ENCODE measurements at regions of chr15 and their contacts with region 1.

Region 1: GRCh38 chr15:67080900-67081431 is 15.6 kb downstream of the SMAD3 start:
- DNase-seq: peak; percentile 99
- ATAC-seq: peak; percentile 58
- H3K4me3 ChIP-seq: peak overlapping the region; percentile 56
- H3K27ac ChIP-seq: peak overlapping the region; percentile 93
- H3K4me1 ChIP-seq: peaks cover 86% of the 10 kb centered on the region
- H3K27me3 ChIP-seq: no peaks in the 10 kb centered on the region
- CTCF ChIP-seq: peak; percentile 44 to 51 (median 49)
- EP300 ChIP-seq: peak; percentile 86 to 93; a peak in 3 of 4 replicates
- POLR2A ChIP-seq: peak; percentile 38; the same call in 1 of the 2 replicates
- RAD21 ChIP-seq: peak; percentile 60

Region 2: GRCh38 chr15:67036775-67037555 is 44.0 kb before region 1 on chr15:
- CTCF ChIA-PET with region 1: interaction called, 3 read pairs
- POLR2A ChIA-PET with region 1: no interaction called
- RAD21 ChIA-PET with region 1: interaction called, 4 read pairs
- SMC1A ChIA-PET with region 1: interaction called, 10 read pairs
- in situ Hi-C with region 1: no loop called
- intact Hi-C with region 1: no loop called
- DNase-seq: no peak
- ATAC-seq: no peak
- H3K4me3 ChIP-seq: no peak overlapping the region
- H3K27ac ChIP-seq: no peak overlapping the region
- H3K4me1 ChIP-seq: peaks cover 5% of the 10 kb centered on the region; the same call in 1 of the 2 replicates
- H3K27me3 ChIP-seq: no peaks in the 10 kb centered on the region
- CTCF ChIP-seq: no peak
- EP300 ChIP-seq: no peak
- POLR2A ChIP-seq: no peak
- RAD21 ChIP-seq: no peak

Region 3: DNA sequence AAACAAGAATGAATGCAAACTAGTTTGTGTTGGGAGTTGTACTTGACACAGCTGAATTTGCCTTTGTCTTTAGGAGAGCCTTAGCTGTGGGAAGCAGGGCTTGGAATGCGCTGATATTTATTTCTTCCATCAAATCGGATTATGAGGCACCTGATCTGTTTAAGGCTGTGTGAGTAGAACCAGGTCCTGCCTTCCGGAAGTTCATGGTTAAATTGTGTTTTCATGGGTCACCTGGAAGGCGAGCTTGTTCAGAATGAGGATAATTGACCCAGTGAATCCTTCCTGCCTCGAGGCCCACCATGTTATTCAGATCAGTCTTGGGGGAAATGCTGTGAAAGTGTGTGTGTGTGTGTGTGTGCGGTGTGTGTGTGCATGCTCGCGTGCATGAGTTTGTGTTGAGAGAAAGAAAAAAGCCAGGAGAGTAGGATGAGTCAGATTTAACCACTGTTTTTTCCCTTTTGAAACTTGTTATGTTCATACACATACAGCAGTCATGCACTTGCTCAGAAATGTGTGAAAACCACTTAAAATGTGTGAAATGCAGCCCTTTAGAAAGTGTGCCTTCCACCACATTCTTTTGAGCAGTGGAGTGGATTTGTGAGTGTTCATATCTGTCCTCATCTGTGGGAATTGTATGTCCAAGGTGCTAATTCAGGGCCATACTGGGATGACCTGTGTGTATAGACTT is 21.1 kb after region 1 on chr15:
- CTCF ChIA-PET with region 1: interaction called, 71 read pairs
- POLR2A ChIA-PET with region 1: interaction called, 79 read pairs
- RAD21 ChIA-PET with region 1: interaction called, 194 read pairs
- SMC1A ChIA-PET with region 1: interaction called, 247 read pairs
- in situ Hi-C with region 1: no loop called
- intact Hi-C with region 1: loop called (anchors 1 kb)
- DNase-seq: peak; percentile 97
- ATAC-seq: peak; percentile 70
- H3K4me3 ChIP-seq: peak overlapping the region; percentile 0; the same call in 1 of the 2 replicates
- H3K27ac ChIP-seq: peak overlapping the region; percentile 98
- H3K4me1 ChIP-seq: peaks cover 76% of the 10 kb centered on the region
- H3K27me3 ChIP-seq: no peaks in the 10 kb centered on the region
- CTCF ChIP-seq: no peak
- EP300 ChIP-seq: peak; percentile 99 to 100
- POLR2A ChIP-seq: no peak
- RAD21 ChIP-seq: peak; percentile 30

Region 4: GRCh38 chr15:67120839-67121643 is 40.1 kb after region 1 on chr15:
- CTCF ChIA-PET with region 1: interaction called, 5 read pairs
- POLR2A ChIA-PET with region 1: interaction called, 4 read pairs
- RAD21 ChIA-PET with region 1: interaction called, 18 read pairs
- SMC1A ChIA-PET with region 1: interaction called, 14 read pairs
- in situ Hi-C with region 1: no loop called
- intact Hi-C with region 1: loop called (anchors 5 kb)
- DNase-seq: peak; percentile 51
- ATAC-seq: peak; percentile 92
- H3K4me3 ChIP-seq: no peak overlapping the region
- H3K27ac ChIP-seq: peak overlapping the region; percentile 58
- H3K4me1 ChIP-seq: peaks cover 49% of the 10 kb centered on the region
- H3K27me3 ChIP-seq: no peaks in the 10 kb centered on the region
- CTCF ChIP-seq: no peak
- EP300 ChIP-seq: peak; percentile 85 to 86; a peak in 2 of 4 replicates
- POLR2A ChIP-seq: peak; percentile 77
- RAD21 ChIP-seq: no peak

Region 5: GRCh38 chr15:67303490-67304363 is 222.8 kb after region 1 on chr15:
- CTCF ChIA-PET with region 1: interaction called, 8 read pairs
- POLR2A ChIA-PET with region 1: no interaction called
- RAD21 ChIA-PET with region 1: interaction called, 4 read pairs
- SMC1A ChIA-PET with region 1: interaction called, 16 read pairs
- in situ Hi-C with region 1: no loop called
- intact Hi-C with region 1: no loop called
- DNase-seq: peak; percentile 24
- ATAC-seq: peak; percentile 70
- H3K4me3 ChIP-seq: no peak overlapping the region
- H3K27ac ChIP-seq: no peak overlapping the region
- H3K4me1 ChIP-seq: no peaks in the 10 kb centered on the region
- H3K27me3 ChIP-seq: no peaks in the 10 kb centered on the region
- CTCF ChIP-seq: peak; percentile 38 to 68 (median 46); a peak in 5 of 6 replicates
- EP300 ChIP-seq: no peak
- POLR2A ChIP-seq: no peak
- RAD21 ChIP-seq: peak; percentile 94